ENCODE measurements at regions of chr18 and their contacts with region 1.

Region 1: DNA sequence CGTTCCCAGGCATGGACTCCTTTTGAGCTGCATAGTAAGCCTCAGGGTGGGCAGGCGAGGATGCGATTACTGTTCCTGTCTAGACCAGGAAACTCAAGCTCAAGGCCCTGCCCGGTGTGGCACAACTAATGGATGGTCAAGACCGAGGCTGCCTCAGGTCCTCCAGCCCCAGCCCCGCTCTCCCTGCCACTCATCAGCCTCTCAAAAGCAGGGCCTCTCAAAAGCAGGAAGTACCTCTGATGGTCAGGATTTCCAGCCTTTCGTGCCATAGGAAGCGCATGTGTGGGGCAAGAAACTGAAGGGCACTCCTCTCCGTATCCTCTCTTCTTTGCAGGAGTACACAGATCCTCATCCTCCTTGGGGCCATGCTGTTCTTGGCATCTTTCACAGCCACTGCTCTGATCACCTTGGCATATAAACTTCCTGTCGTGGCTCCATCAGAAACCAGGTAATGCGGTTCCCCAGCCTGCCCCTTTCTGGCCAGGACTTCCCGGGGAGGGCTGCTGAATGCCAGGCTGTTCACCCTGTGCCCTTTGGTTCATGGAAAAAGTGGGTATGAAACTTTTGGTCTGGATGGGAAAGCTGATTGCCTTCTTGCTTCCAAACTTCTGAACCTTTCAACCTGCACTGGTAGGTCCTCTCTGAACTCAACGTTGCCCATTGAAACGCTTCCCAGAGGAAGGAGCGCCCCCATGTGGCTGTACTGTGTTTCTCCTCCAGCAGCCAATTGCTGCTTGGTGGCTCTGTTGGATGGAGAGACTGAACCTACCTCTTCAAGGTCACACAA is 82.8 kb upstream of the SEC11C start:
- DNase-seq: peak; percentile 46 to 80
- H3K4me3 ChIP-seq: no peak overlapping the region
- H3K27ac ChIP-seq: peak overlapping the region in 1 of 2 donors; percentile 54
- H3K4me1 ChIP-seq: no peaks in the 10 kb centered on the region
- H3K27me3 ChIP-seq: no peaks in the 10 kb centered on the region
- CTCF ChIP-seq: peak; percentile 75 to 90 (median 83)
- POLR2A ChIP-seq: no peak

Region 2: GRCh38 chr18:58080451-58080850 is 976.4 kb before region 1 on chr18:
- intact Hi-C with region 1: no loop called
- DNase-seq: no peak
- H3K4me3 ChIP-seq: no peak overlapping the region
- H3K27ac ChIP-seq: peak overlapping the region; percentile 48 to 57
- H3K4me1 ChIP-seq: peaks cover 0 to 5% of the 10 kb centered on the region in 2 donors
- H3K27me3 ChIP-seq: no peaks in the 10 kb centered on the region
- CTCF ChIP-seq: no peak
- POLR2A ChIP-seq: no peak

Region 3: DNA sequence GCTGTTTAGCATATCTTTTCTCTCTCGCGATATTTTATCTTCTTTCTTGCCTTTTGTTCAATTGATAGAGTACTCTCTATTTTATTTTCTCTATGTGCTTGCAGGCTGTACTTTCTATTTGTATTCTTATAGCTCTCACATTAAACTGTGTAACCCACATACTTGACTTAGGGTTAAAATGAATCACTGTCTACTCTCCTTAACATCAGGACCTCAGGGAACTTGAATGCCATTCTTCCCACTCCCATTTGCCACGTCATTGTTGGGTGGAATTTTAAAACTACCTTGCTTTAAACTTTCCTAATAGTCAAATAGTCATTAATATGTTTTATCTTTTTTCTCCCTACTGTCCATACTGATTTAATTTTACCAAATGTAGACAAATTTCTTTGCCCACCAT is 697.7 kb before region 1 on chr18:
- intact Hi-C with region 1: loop called (anchors 5 kb)
- DNase-seq: no peak
- H3K4me3 ChIP-seq: no peak overlapping the region
- H3K27ac ChIP-seq: no peak overlapping the region
- H3K4me1 ChIP-seq: no peaks in the 10 kb centered on the region
- H3K27me3 ChIP-seq: no peaks in the 10 kb centered on the region
- CTCF ChIP-seq: no peak
- POLR2A ChIP-seq: no peak

Measured in breast epithelium (tissue), 4 donors.